CD4-positive, alpha-beta T cell (primary cell): ENCODE measurements at regions of chr20 and their contacts with region 1.

Region 1: GRCh38 chr20:833450-834150 is at the start of gene FAM110A:
- DNase-seq: peak; percentile 91 to 98 (median 94)
- ATAC-seq: peak; percentile 93
- H3K4me3 ChIP-seq: peak within 1 kb of the TSS; percentile 74
- H3K4me3 Mint-ChIP-seq: peak within 1 kb of the TSS; percentile 92
- H3K27ac ChIP-seq: peak within 1 kb of the TSS; percentile 83 to 93
- H3K27ac Mint-ChIP-seq: peak within 1 kb of the TSS; percentile 87
- H3K4me1 ChIP-seq: peaks cover 40% of the 10 kb centered on the region
- H3K4me1 Mint-ChIP-seq: peaks cover 50% of the 10 kb centered on the region
- H3K27me3 ChIP-seq: no peaks in the 10 kb centered on the region
- H3K27me3 Mint-ChIP-seq: no peaks in the 10 kb centered on the region
- CTCF ChIP-seq: no peak
- total RNA-seq, gene FAM110A: 4.5 to 4.8 TPM

Region 2: DNA sequence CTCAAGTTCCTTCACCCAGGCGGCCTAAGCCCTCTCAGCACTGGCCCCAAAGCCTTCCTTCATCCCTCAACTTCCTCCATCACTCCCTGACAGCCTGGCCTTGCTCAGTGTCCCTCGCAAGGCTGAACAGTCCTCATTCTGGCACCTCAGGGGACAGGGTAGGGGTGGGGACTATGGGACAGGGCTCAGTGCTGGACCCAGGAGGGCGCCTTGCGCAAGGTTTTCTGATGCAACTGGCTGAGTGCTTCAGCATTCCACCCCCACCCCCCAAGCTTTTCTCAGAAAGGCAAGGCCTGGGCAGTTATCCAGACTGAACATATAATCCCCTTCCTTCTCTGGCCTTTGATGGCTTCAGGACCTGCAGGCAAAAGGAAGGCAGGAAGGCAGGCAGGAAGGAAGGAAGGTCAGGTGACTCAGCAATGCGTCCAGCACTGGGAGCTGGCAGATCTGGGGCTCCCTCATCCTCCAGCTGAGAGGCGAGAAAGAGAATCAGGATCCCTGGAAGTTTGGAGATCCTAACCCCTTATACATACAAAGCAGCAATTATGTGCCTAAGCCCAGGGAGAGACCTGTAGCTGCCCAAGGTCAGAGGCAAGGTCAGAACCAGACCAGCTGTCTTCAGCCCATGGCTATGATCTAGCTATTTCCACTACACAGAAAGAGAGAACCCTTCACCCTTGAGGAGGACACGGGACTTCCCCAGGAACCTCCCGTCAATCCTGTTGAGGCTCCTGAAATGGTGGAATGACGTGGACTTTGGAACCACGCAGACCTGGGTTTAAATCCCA is 461.7 kb before region 1 on chr20:
- CTCF ChIA-PET with region 1: no interaction called
- POLR2A ChIA-PET with region 1: no interaction called
- intact Hi-C with region 1: no loop called
- DNase-seq: peak in 2 of 14 experiments; percentile 37 to 51
- ATAC-seq: no peak
- H3K4me3 ChIP-seq: no peak overlapping the region
- H3K4me3 Mint-ChIP-seq: no peak overlapping the region
- H3K27ac ChIP-seq: no peak overlapping the region
- H3K27ac Mint-ChIP-seq: no peak overlapping the region
- H3K4me1 ChIP-seq: peaks cover 16% of the 10 kb centered on the region
- H3K4me1 Mint-ChIP-seq: peaks cover 16% of the 10 kb centered on the region
- H3K27me3 ChIP-seq: no peaks in the 10 kb centered on the region
- H3K27me3 Mint-ChIP-seq: no peaks in the 10 kb centered on the region
- CTCF ChIP-seq: no peak

Region 3: GRCh38 chr20:478949-479429 is 354.6 kb before region 1 on chr20:
- CTCF ChIA-PET with region 1: no interaction called
- POLR2A ChIA-PET with region 1: no interaction called
- intact Hi-C with region 1: no loop called
- DNase-seq: peak in 6 of 14 experiments; percentile 4 to 81 (median 62)
- ATAC-seq: peak; percentile 88
- H3K4me3 ChIP-seq: no peak overlapping the region
- H3K4me3 Mint-ChIP-seq: no peak overlapping the region
- H3K27ac ChIP-seq: no peak overlapping the region
- H3K27ac Mint-ChIP-seq: no peak overlapping the region
- H3K4me1 ChIP-seq: peaks cover 11% of the 10 kb centered on the region
- H3K4me1 Mint-ChIP-seq: peaks cover 28% of the 10 kb centered on the region
- H3K27me3 ChIP-seq: no peaks in the 10 kb centered on the region
- H3K27me3 Mint-ChIP-seq: no peaks in the 10 kb centered on the region
- CTCF ChIP-seq: peak; percentile 77

Region 4: GRCh38 chr20:543369-544152 is 290.0 kb before region 1 on chr20 and contains the start of gene CSNK2A1:
- CTCF ChIA-PET with region 1: no interaction called
- POLR2A ChIA-PET with region 1: interaction called, 5 read pairs
- intact Hi-C with region 1: loop called in 1 of 2 experiments (anchors 5 kb)
- DNase-seq: peak; percentile 91 to 98 (median 96)
- ATAC-seq: peak; percentile 91
- H3K4me3 ChIP-seq: peak within 1 kb of the TSS; percentile 88
- H3K4me3 Mint-ChIP-seq: peak within 1 kb of the TSS; percentile 100
- H3K27ac ChIP-seq: peak within 1 kb of the TSS; percentile 83 to 98
- H3K27ac Mint-ChIP-seq: peak within 1 kb of the TSS; percentile 99
- H3K4me1 ChIP-seq: peaks cover 32% of the 10 kb centered on the region
- H3K4me1 Mint-ChIP-seq: peaks cover 54% of the 10 kb centered on the region
- H3K27me3 ChIP-seq: no peaks in the 10 kb centered on the region
- H3K27me3 Mint-ChIP-seq: peaks cover 12% of the 10 kb centered on the region
- CTCF ChIP-seq: no peak
- total RNA-seq, gene CSNK2A1: 55.5 to 56.9 TPM

Region 5: GRCh38 chr20:653110-653589 is 180.4 kb before region 1 on chr20 and contains the start of gene SRXN1:
- CTCF ChIA-PET with region 1: no interaction called
- POLR2A ChIA-PET with region 1: no interaction called
- intact Hi-C with region 1: loop called in 1 of 2 experiments (anchors 5 kb)
- DNase-seq: peak; percentile 53 to 89 (median 71)
- ATAC-seq: peak; percentile 87
- H3K4me3 ChIP-seq: peak within 1 kb of the TSS; percentile 62
- H3K4me3 Mint-ChIP-seq: peak within 1 kb of the TSS; percentile 86
- H3K27ac ChIP-seq: peak within 1 kb of the TSS in 1 of 2 donors; percentile 4
- H3K27ac Mint-ChIP-seq: peak within 1 kb of the TSS; percentile 4
- H3K4me1 ChIP-seq: peaks cover 23% of the 10 kb centered on the region
- H3K4me1 Mint-ChIP-seq: peaks cover 34% of the 10 kb centered on the region
- H3K27me3 ChIP-seq: peaks cover 0 to 7% of the 10 kb centered on the region in 2 experiments
- H3K27me3 Mint-ChIP-seq: peaks cover 22% of the 10 kb centered on the region
- CTCF ChIP-seq: peak; percentile 40
- total RNA-seq, gene SRXN1: 1.2 to 1.4 TPM

Region 6: GRCh38 chr20:844473-845225 is 11.0 kb after region 1 on chr20:
- CTCF ChIA-PET with region 1: interaction called, 6 read pairs
- POLR2A ChIA-PET with region 1: interaction called, 109 read pairs
- intact Hi-C with region 1: loop called (anchors 1 kb)
- DNase-seq: peak; percentile 82 to 96 (median 91)
- ATAC-seq: peak; percentile 97
- H3K4me3 ChIP-seq: peak overlapping the region; percentile 74
- H3K4me3 Mint-ChIP-seq: peak overlapping the region; percentile 89
- H3K27ac ChIP-seq: peak overlapping the region in 1 of 2 donors; percentile 64
- H3K27ac Mint-ChIP-seq: peak overlapping the region; percentile 89
- H3K4me1 ChIP-seq: peaks cover 84% of the 10 kb centered on the region
- H3K4me1 Mint-ChIP-seq: peaks cover 60% of the 10 kb centered on the region
- H3K27me3 ChIP-seq: peaks cover 0 to 4% of the 10 kb centered on the region in 2 experiments
- H3K27me3 Mint-ChIP-seq: no peaks in the 10 kb centered on the region
- CTCF ChIP-seq: no peak

Region 7: DNA sequence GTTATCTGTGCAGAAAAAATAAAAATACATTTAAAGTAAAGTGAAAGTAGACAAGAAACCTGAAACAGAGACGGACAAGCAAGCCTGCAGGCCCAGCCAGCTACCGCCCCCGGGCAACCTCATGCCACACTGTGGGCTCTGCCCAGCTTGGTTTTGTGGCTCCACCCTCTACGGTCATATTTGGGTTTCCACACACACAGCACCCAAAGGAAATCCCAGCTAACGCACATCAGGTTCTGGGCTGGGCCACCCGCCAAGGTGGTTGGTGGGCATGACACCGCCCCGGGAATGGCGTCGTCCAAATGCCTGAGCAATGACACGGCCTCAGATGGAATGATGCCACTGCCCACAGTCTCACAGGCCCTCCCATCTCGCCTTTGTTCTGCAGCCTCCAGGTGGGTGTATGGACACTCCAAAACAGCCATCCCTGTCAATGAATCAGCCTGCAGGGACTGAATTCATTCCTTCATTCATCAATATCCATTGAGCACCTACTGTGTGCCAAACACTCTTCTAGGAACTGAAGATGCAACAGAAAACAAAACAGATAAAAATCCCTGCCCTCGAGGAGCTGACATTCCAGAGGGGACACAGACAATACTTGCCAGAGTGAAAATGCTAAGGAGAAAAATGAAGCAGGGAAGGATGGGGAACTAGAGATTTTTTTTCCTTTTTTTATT is 22.9 kb after region 1 on chr20:
- CTCF ChIA-PET with region 1: interaction called, 3 read pairs
- POLR2A ChIA-PET with region 1: interaction called, 10 read pairs
- intact Hi-C with region 1: no loop called
- DNase-seq: peak in 12 of 14 experiments; percentile 17 to 70 (median 44)
- ATAC-seq: peak; percentile 85
- H3K4me3 ChIP-seq: no peak overlapping the region
- H3K4me3 Mint-ChIP-seq: peak overlapping the region; percentile 54
- H3K27ac ChIP-seq: no peak overlapping the region
- H3K27ac Mint-ChIP-seq: peak overlapping the region; percentile 74
- H3K4me1 ChIP-seq: peaks cover 58% of the 10 kb centered on the region
- H3K4me1 Mint-ChIP-seq: peaks cover 45% of the 10 kb centered on the region
- H3K27me3 ChIP-seq: no peaks in the 10 kb centered on the region
- H3K27me3 Mint-ChIP-seq: no peaks in the 10 kb centered on the region
- CTCF ChIP-seq: no peak

Region 8: DNA sequence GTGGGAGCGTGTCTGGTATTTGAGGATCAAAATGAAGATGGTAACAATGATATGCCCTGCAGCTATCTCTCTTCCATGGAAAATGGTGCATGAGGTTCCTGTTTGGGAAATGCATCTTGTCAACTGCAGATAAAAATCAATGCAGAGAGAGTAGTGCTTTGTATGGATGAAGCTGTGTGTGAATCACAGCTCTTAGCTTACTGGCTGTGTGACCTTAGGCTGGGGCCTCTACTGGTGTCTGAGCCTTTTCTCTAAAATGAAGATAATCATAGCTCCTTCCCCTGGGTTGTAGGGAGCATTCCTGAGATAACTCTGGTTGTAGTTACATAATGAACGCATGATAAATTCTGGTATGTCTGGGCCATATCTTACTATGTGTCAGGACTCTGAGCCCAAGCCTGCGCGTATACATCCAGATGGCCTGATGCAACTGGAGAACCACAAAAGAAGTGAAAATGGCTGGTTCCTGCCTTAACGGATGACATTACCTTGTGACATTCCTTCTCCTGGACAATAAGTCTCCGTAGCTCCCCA is 63.0 kb after region 1 on chr20:
- CTCF ChIA-PET with region 1: no interaction called
- POLR2A ChIA-PET with region 1: no interaction called
- intact Hi-C with region 1: no loop called
- DNase-seq: no peak
- ATAC-seq: no peak
- H3K4me3 ChIP-seq: no peak overlapping the region
- H3K4me3 Mint-ChIP-seq: no peak overlapping the region
- H3K27ac ChIP-seq: no peak overlapping the region
- H3K27ac Mint-ChIP-seq: no peak overlapping the region
- H3K4me1 ChIP-seq: no peaks in the 10 kb centered on the region
- H3K4me1 Mint-ChIP-seq: no peaks in the 10 kb centered on the region
- H3K27me3 ChIP-seq: peaks cover 0 to 4% of the 10 kb centered on the region in 2 experiments
- H3K27me3 Mint-ChIP-seq: peaks cover 9% of the 10 kb centered on the region
- CTCF ChIP-seq: no peak

Region 9: GRCh38 chr20:956330-956951 is 122.8 kb after region 1 on chr20:
- CTCF ChIA-PET with region 1: interaction called, 13 read pairs
- POLR2A ChIA-PET with region 1: no interaction called
- intact Hi-C with region 1: no loop called
- DNase-seq: peak; percentile 56 to 84 (median 68)
- ATAC-seq: peak; percentile 88
- H3K4me3 ChIP-seq: no peak overlapping the region
- H3K4me3 Mint-ChIP-seq: no peak overlapping the region
- H3K27ac ChIP-seq: no peak overlapping the region
- H3K27ac Mint-ChIP-seq: no peak overlapping the region
- H3K4me1 ChIP-seq: peaks cover 4% of the 10 kb centered on the region
- H3K4me1 Mint-ChIP-seq: peaks cover 5% of the 10 kb centered on the region
- H3K27me3 ChIP-seq: peaks cover 11 to 17% of the 10 kb centered on the region in 2 experiments
- H3K27me3 Mint-ChIP-seq: peaks cover 66% of the 10 kb centered on the region
- CTCF ChIP-seq: peak; percentile 99

Region 10: DNA sequence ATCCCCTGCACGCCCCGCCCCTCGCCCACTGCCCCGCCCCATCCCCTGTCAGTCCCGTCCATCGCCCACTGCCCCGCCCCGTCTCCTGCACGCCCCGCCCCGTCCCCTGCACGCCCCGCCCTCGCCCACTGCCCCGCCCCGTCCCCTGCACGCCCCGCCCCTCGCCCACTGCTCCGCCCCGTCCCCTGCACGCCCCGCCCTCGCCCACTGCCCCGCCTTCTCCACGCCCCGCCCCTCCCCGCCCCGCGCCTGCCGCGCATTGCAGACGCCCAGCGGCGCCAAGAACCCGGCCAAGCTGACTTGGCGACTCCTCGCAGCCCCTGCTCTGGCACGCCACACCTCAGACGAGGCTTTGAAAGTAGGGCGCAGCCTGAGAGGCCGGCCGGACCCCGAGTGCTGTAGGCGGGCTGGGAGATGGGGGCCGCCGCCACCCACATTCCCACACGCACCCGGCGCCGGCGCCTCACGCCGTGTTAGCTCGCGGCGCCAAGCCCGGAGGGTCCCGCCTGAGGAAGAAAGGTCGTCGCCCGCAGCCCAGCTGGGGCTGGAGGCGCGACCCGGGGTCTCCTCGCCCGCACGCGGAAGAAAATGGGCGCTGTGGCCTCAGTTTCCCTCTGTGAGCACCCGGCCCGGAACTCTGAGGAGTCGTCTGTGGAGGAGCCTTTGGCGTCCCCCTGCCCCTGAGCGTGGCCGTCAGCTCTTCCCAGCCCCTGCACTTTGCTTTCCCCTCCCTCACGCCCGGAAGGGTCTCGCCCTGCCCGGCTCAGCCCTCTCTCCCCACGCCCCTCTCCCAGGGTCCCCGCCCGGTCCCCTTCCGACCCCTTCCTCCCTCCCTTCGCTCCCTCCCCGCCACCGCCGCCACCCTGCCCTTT is 392.4 kb after region 1 on chr20 and contains the start of gene RAD21L1:
- CTCF ChIA-PET with region 1: no interaction called
- POLR2A ChIA-PET with region 1: no interaction called
- intact Hi-C with region 1: loop called in 1 of 2 experiments (anchors 5 kb)
- DNase-seq: peak; percentile 73 to 92 (median 80)
- ATAC-seq: peak; percentile 80
- H3K4me3 ChIP-seq: peak within 1 kb of the TSS; percentile 77
- H3K4me3 Mint-ChIP-seq: peak within 1 kb of the TSS; percentile 92
- H3K27ac ChIP-seq: peak within 1 kb of the TSS in 1 of 2 donors; percentile 22
- H3K27ac Mint-ChIP-seq: peak within 1 kb of the TSS; percentile 53
- H3K4me1 ChIP-seq: peaks cover 18% of the 10 kb centered on the region
- H3K4me1 Mint-ChIP-seq: peaks cover 19% of the 10 kb centered on the region
- H3K27me3 ChIP-seq: peaks cover 0 to 15% of the 10 kb centered on the region in 2 experiments
- H3K27me3 Mint-ChIP-seq: peaks cover 21% of the 10 kb centered on the region
- CTCF ChIP-seq: no peak
- total RNA-seq, gene RAD21L1: 0.58 TPM in 1 of 2 experiments, not detected in the other